BJ (cell line): ENCODE measurements at regions of chr9 and their contacts with region 1.

Region 1: DNA sequence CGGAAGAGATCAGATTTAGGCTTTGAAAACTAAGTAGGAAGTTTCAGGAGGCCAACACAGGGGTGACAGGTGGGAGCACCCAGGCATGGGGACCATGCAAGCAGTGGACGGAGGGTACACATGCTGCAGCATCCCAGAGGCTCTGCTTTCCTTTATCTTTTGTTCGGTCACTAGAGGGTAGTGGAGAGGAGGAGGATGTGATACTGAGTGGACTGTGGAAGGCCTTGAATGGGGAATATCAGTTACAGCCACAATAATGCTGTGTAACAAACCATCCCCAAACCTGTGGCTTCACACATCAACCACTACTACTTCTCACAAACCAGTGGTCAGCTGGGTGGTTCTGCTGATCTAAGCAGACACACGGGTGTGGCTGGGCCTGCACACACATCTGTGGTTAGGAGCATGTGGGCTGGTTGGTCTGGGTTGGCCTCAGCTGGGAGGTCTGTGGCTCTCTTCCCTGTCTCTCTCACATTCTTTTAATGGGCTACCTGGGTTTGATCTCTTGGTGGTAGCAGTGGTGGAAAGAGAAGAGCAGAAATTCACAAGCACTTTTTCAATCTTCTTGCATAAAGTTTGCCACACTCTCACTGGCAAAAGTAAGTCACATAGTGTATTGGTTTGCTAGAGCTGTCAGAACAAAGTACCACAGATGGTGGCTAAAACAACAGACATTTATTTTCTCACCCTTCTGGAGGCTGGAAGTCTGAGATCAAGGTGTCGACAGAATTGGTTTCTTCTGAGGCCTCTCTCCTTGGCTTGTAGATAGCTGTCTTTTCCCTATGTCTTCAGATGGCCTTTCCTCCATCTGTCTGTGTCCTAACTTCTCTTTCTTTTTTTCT is 238.7 kb downstream of the AGTPBP1 start:
- DNase-seq: no peak
- H3K4me3 ChIP-seq: no peak overlapping the region
- H3K27me3 ChIP-seq: no peaks in the 10 kb centered on the region
- CTCF ChIP-seq: no peak

Region 2: GRCh38 chr9:85610074-85610860 is 107.2 kb after region 1 on chr9:
- CTCF ChIA-PET with region 1: interaction called, 13 read pairs
- POLR2A ChIA-PET with region 1: no interaction called
- DNase-seq: peak; percentile 18
- H3K4me3 ChIP-seq: peak overlapping the region; percentile 1; the same call in 1 of the 2 replicates
- H3K27me3 ChIP-seq: no peaks in the 10 kb centered on the region
- CTCF ChIP-seq: peak; percentile 77